ENCODE measurements at regions of chr18 and their contacts with region 1.

Region 1: DNA sequence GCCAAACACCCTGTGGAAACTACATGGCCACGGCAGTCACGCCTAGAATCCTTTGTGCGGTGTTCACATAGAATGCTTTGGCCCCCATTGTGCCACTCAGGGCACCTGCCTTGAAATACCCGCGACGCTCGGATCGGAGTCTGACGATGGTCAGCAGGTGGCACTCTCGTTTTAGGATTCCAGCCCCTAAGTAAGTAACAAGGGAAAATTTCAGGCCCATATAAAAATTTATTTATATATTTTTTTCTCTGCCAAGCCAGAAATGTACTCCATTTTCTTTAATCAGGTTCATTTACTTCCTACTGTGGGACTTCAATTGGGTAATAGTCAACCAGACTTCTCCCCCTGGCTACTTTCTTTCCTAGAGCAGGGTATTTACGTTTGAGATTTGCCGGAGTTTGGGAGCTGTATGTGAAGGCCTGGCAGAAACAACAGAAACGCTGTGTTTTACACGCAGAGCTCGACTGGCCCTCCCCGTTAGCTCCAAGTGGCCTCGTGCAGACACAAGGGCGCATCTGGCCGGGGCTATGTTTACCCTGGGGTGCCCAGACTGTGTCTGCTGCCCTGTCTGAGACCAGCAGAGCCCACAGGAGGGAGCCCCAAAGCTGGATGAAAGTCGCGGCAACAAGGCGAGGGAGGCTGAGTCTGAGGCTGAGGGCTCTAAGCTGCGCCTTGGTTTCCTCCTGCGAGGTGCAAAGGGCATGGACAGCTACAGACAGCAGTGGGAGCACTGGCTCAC is 41.6 kb downstream of the LRRC30 start:
- DNase-seq: peak; percentile 27 to 90 (median 67)
- H3K4me3 ChIP-seq: peak overlapping the region in 1 of 4 donors; percentile 30
- H3K27ac ChIP-seq: peak overlapping the region in 4 of 5 donors; percentile 6 to 78 (median 50)
- H3K4me1 ChIP-seq: peaks cover 12 to 19% of the 10 kb centered on the region in 2 donors
- H3K27me3 ChIP-seq: no peaks in the 10 kb centered on the region
- CTCF ChIP-seq: peak; percentile 13 to 63 (median 44)
- POLR2A ChIP-seq: no peak

Region 2: DNA sequence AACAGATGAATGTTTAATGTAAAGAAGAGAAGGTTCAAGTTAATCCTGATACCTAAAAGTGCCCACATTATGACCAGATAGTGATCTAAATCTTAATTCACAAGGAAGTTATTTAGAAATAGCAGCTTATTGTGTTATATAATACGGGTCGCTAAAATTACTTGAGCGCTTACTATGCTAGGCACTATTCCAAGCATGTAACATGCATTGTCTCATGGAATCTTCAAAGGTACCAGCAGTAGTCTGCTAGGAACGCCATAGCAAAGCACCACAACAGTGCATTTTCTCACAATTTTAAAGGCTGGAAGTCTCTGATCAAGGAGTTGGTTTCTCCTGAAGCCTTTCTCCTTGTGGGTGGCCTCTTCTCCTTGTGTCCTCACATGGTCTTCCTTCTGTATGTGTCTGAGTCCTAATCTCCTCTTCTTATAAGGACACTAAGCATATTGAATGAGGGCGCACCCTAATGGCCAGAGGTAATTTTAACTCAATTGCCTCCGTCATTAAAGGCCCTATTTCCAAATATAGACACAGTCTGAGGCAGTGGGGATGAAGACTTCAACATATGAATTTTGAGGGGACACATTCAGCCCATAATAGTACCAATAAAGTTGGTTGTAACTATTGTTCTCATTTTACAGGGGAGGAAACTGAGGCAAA is 76.8 kb after region 1 on chr18:
- intact Hi-C with region 1: no loop called
- DNase-seq: no peak
- H3K4me3 ChIP-seq: no peak overlapping the region
- H3K27ac ChIP-seq: no peak overlapping the region
- H3K4me1 ChIP-seq: no peaks in the 10 kb centered on the region
- H3K27me3 ChIP-seq: no peaks in the 10 kb centered on the region
- CTCF ChIP-seq: no peak
- POLR2A ChIP-seq: no peak

Region 3: DNA sequence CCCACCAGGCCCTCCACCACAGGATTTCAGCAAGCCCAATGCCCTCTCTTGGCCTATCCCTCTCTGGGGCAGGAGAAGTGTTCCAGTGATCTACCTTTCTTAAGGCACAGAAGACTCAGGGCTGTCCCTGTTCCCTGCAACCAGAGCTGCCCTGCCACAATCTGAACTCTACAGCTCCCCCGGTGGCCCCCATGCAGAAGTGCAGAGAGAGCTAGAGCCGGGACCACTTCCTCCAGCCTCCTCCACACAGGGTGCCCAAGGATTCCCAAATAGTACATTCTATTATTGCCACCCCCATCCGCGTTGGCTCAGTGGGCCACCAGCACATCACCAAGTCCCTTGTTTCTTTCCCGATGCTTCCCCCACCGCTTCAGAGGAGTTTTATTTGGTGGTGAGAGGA is 179.9 kb after region 1 on chr18:
- intact Hi-C with region 1: loop called in 1 of 2 experiments (anchors 10 kb)
- DNase-seq: peak in 5 of 7 donors; percentile 21 to 55 (median 37)
- H3K4me3 ChIP-seq: no peak overlapping the region
- H3K27ac ChIP-seq: no peak overlapping the region
- H3K4me1 ChIP-seq: no peaks in the 10 kb centered on the region
- H3K27me3 ChIP-seq: no peaks in the 10 kb centered on the region
- CTCF ChIP-seq: peak; percentile 21 to 60 (median 47)
- POLR2A ChIP-seq: no peak

Region 4: DNA sequence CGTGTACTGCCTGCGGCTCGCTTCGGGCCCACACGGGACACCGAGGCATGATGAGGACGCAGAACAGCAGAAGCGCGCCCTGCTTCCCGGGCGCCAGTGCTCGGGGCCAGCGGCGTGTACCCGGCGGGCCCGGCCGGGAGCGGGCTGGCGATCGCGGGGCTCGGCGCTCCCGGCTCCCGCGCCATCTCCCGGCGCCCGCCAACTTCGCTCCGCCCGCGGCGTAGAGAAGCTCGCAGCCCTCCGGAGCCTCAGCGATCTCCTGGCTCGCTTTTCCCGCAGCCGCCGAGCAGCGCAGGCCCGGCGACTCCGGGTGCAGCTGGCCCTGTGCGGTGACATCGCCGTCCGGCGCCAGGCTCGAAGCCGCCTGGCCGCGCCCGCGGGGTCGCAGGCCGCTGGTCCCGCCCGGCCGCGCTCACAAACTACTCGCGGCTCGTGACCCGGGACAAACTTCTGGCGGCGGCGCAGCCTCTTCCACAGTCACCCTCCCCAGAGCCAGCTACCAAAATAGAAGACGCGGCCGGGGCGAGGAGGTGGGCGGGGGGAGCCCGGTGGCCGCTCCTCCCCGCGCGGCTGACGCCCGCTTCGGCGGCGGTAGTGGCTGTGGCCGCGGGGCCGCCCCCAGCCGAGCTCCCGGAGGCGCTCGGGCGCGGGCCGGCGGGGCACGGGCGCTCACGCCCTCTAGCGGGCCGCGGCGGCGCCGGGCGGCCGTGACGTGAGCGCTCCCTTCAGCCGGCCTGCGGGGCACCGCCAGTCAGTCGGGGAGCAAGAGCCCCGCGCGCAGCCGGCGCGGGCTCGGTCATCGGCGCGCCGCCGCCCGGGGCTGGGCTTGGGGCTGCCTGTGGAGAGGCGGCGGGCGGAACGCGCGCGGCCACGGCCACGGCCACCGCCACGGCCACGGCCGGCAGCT is 294.3 kb after region 1 on chr18 and contains the start of gene PTPRM:
- intact Hi-C with region 1: loop called (anchors 5 to 10 kb)
- DNase-seq: peak; percentile 87 to 93 (median 89)
- H3K4me3 ChIP-seq: peak within 1 kb of the TSS; percentile 32 to 92 (median 50)
- H3K27ac ChIP-seq: peak within 1 kb of the TSS; percentile 85 to 99 (median 94)
- H3K4me1 ChIP-seq: peaks cover 9 to 30% of the 10 kb centered on the region in 2 donors
- H3K27me3 ChIP-seq: no peaks in the 10 kb centered on the region
- CTCF ChIP-seq: peak in 3 of 6 experiments; percentile 34 to 88 (median 80)
- POLR2A ChIP-seq: peak; percentile 64 to 91
- total RNA-seq, gene PTPRM: 31.7 to 116 (median 57.5) TPM